AG04450 (cell line): ENCODE measurements at regions of chr1 and their contacts with region 1.

Region 1: DNA sequence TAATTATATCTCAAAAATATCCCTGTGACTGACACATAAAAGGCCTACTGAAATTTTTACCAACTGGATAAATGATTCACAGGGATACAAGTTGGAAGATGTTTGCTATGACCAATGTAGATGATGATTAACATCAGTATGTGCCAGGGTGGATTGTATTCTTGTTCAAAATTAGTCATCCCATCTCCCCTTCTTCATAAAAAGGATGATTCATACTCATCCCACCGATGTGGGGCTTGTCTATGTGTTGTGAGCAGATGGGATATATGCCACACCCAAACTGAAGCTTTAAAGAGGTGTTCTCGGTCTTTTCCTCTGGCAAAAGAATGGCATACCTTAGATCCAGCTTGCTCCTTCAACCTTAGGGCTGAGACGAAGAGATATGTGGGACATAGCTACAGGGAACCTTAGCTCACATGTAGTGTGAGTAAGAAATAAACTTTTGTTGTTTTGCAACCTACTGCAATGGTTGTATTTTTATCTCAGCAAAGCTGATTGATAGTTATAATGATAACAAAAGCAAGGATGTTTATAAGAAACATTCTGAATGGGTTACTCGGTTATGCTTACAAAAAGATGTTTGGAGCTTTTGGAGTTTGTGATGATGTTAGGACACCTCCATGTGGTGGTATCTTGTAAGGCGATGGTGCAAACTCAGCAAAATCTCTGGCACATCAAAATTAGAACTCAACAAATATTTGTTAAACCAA is 29.4 kb downstream of the SPATA17 start:
- DNase-seq: peak; percentile 70
- H3K4me3 ChIP-seq: no peak overlapping the region
- H3K27ac ChIP-seq: peak overlapping the region; percentile 85
- H3K27me3 ChIP-seq: no peaks in the 10 kb centered on the region
- CTCF ChIP-seq: peak; percentile 79

Region 2: DNA sequence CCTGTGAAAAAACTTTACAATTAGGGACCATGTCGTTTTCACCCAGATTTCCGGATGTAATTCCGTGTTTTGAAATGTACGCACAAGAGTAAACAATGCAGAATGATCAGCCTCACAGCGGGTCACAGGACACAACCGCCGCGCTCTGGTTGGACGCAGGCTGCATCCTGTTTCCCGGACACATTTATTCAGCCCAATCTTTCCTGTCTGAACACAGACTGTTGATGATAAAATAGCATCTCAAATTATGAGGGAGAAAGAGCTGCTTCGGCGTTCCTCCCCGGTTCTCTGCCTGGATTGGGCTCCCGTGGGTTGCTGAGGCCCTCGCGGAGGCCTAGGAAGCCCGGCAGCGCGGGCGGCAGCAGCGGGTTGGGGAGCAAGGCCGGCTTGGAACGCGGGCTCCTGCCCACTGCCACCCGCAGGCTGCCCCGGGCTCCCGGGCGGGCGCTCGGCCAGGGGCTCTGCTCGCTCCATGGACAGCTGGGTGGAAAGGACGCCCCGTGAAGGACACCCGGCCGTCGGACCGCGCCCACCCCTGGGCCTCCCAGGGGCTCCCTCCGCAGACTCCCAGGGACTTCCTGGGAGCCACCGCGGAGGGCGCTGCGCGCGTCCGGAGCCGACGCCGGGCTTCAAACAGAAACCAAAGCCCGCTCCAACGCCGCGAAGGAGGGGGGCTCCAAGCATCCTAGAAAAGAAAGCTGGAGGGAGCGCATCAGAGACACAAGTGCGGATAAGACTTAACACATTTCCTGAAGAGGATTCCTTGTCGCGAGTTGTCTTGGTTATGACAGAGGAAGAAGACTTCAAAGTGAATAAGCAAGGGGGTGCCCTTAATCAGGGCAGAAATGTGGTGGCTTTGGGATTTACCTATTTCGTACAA is 1059.5 kb before region 1 on chr1:
- CTCF ChIA-PET with region 1: interaction called, 11 read pairs
- POLR2A ChIA-PET with region 1: interaction called, 5 read pairs
- DNase-seq: peak; percentile 38
- H3K4me3 ChIP-seq: peak overlapping the region; percentile 66
- H3K27ac ChIP-seq: peak overlapping the region; percentile 96
- H3K27me3 ChIP-seq: no peaks in the 10 kb centered on the region
- CTCF ChIP-seq: peak; percentile 70

Region 3: GRCh38 chr1:216750012-216750627 is 910.4 kb before region 1 on chr1:
- CTCF ChIA-PET with region 1: interaction called, 23 read pairs
- POLR2A ChIA-PET with region 1: no interaction called
- DNase-seq: peak; percentile 11
- H3K4me3 ChIP-seq: no peak overlapping the region
- H3K27ac ChIP-seq: no peak overlapping the region
- H3K27me3 ChIP-seq: no peaks in the 10 kb centered on the region
- CTCF ChIP-seq: peak; percentile 78

Region 4: DNA sequence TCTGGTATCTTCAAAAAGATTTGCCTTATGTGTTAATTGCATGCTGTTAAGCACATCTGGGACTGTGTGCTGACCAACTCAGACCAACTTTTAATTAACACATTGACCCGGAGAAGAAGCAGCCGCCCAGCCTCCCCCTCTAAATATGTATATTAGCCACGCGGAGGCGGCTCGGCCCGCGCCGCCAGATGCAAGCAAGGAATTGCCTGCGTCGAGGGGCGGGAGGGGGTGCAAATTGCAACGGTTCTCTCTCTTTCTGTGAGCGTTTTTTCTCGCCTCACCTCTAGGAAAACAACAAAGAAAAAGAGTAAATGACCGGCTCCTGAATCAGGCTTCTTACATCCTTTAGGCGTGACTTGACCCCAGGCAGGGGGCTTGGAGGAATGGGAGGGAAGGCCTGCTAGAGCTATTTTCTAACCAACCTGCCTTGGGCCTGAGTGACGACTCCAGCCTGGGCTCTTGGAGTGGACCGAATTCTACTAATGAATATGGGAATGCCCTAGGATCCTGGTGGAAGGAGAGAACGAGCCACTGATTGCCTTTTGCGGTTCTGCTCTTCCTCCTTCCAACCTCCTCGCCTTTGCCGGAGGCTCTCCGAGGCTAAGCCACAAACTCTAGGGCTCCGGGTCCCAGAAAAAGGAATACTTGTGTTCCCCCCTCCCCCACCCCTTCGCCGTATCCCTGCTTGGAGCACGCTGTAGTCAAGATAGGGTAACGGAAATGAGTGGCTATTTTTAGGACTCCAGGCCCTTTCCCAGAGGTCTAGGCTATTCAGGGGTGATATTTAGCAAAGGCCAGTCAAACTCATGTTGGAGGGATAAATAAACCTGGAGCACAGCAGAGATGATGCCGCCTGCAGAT is 520.2 kb before region 1 on chr1:
- CTCF ChIA-PET with region 1: no interaction called
- POLR2A ChIA-PET with region 1: no interaction called
- DNase-seq: no peak
- H3K4me3 ChIP-seq: no peak overlapping the region
- H3K27ac ChIP-seq: no peak overlapping the region
- H3K27me3 ChIP-seq: peaks cover 53% of the 10 kb centered on the region
- CTCF ChIP-seq: no peak

Region 5: GRCh38 chr1:217418269-217419193 is 242.0 kb before region 1 on chr1:
- CTCF ChIA-PET with region 1: interaction called, 13 read pairs
- POLR2A ChIA-PET with region 1: no interaction called
- DNase-seq: peak; percentile 18
- H3K4me3 ChIP-seq: peak overlapping the region; percentile 31; the same call in 1 of the 2 replicates
- H3K27ac ChIP-seq: peak overlapping the region; percentile 68
- H3K27me3 ChIP-seq: no peaks in the 10 kb centered on the region
- CTCF ChIP-seq: no peak

Region 6: DNA sequence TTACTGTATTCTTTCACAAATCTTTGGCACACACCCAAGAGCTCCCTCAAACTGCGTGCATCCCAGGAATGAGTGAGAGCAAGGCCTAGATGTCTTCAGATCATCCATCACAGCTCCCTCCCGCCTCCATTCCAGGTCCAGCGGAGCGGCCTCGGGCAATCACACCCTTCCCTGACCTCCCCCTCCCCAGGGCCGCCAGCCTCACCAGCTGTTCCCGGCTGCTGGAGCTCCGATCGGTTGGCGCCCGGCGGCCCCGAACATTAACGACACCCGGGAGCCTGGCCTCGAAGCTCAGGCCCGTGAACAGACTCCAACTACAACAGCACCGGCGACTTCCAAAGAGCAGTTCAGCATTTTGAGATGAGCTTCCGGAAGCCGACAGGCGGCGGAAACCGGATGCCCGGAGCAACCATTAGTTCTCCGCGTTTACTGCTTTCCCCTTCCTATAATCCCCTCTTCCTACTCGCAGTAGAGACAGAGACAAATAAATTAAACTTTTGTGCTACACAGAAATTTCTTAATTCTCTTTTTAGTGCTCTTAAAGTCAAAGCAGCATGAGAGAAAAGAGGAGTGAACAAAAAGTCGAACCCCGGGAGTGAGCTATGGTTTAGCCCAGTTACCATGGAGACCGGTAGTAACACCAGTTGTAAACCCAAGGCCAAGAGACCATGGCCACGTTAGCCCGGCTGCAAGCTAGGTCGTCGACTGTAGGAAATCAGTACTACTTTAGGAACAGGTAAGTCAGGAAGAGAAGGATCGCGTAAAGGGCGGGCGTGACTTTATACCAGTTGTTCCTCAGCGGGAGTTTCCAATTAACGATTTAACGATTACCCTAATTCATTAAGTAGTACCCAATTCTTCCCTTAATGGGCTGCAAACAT is 29.6 kb before region 1 on chr1 and contains the starts of genes GPATCH2 and SPATA17:
- CTCF ChIA-PET with region 1: interaction called, 11 read pairs
- POLR2A ChIA-PET with region 1: interaction called, 9 read pairs
- DNase-seq: peak; percentile 74
- H3K4me3 ChIP-seq: peak within 1 kb of the TSS; percentile 69
- H3K27ac ChIP-seq: peak within 1 kb of the TSS; percentile 90
- H3K27me3 ChIP-seq: no peaks in the 10 kb centered on the region
- CTCF ChIP-seq: peak; percentile 50
- polyA plus RNA-seq, gene GPATCH2: 8.5 and 11.1 TPM in 2 replicates
- polyA plus RNA-seq, gene SPATA17: 0.61 and 0.69 TPM in 2 replicates